ENCODE measurements at regions of chr15 and their contacts with region 1.

Region 1: GRCh38 chr15:60994963-60995475 is 234.1 kb downstream of the RORA start:
- DNase-seq: peak; percentile 12 to 44
- ATAC-seq: peak in 6 of 8 donors; percentile 46 to 79 (median 60)
- H3K4me3 ChIP-seq: no peak overlapping the region
- H3K27ac ChIP-seq: peak overlapping the region in 6 of 10 donors; percentile 15 to 69 (median 32)
- H3K4me1 ChIP-seq: peaks cover 0 to 32% (median 10%) of the 10 kb centered on the region in 9 donors
- H3K27me3 ChIP-seq: no peaks in the 10 kb centered on the region
- CTCF ChIP-seq: no peak

Region 2: GRCh38 chr15:61038387-61038786 is 43.4 kb after region 1 on chr15:
- intact Hi-C with region 1: loop called in 1 of 10 experiments (anchors 5 kb)
- DNase-seq: peak in 1 of 2 donors; percentile 38
- ATAC-seq: peak in 1 of 8 donors; percentile 36
- H3K4me3 ChIP-seq: no peak overlapping the region
- H3K27ac ChIP-seq: no peak overlapping the region
- H3K4me1 ChIP-seq: peaks cover 0 to 47% (median 35%) of the 10 kb centered on the region in 9 donors
- H3K27me3 ChIP-seq: no peaks in the 10 kb centered on the region
- CTCF ChIP-seq: no peak

Region 3: GRCh38 chr15:61499376-61499775 is 504.4 kb after region 1 on chr15:
- intact Hi-C with region 1: no loop called
- DNase-seq: no peak
- ATAC-seq: no peak
- H3K4me3 ChIP-seq: no peak overlapping the region
- H3K27ac ChIP-seq: no peak overlapping the region
- H3K4me1 ChIP-seq: no peaks in the 10 kb centered on the region
- H3K27me3 ChIP-seq: peaks cover 0 to 31% (median 19%) of the 10 kb centered on the region in 7 donors
- CTCF ChIP-seq: no peak

Measured in heart right ventricle (tissue), 16 donors.